SK-MEL-5 (cell line): ENCODE measurements at regions of chr4 and their contacts with region 1.

Region 1: GRCh38 chr4:28073860-28074555 is 1213.4 kb downstream of the STIM2 start:
- DNase-seq: peak; percentile 35

Region 2: DNA sequence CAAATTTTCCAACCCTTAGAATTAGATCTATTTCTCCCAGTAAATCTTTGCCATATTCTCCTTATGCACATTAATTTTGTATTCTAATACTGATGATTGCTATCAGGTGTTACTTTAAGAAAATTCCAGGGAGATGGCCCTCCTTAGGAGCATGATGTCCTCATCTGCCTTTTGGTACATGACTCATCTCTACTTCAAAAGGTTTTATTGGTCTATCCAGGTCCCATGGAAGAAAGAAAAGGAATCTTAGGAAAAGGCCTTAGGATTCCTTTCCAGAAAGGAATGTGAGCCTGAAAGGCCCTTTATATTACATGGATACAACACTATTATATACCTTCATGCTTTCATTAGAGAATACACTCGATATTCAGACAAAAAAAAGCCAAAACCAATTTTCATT is 245.2 kb before region 1 on chr4:
- in situ Hi-C with region 1: no loop called
- DNase-seq: peak; percentile 6

Region 3: DNA sequence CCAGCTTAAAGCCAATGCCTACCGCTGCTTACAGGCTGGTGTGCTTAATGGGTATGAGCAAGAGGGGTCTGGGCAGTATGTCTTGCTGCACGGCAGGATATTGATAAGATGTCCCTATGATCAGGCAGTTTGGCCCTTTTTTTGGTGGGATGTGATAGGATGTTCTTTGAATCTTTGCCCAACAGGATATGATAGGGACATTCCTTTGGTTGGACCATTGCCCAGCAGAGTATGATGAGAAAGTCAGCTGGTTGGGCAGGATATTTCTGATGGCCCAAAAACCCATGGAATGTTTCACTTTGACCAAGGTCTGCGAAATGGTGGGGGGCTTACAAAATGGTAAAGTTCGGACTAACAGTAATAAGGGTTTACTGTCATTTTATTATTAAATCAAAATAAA is 152.8 kb before region 1 on chr4:
- in situ Hi-C with region 1: loop called (anchors 25 kb)
- DNase-seq: peak; percentile 22

Region 4: GRCh38 chr4:28287837-28288236 is 213.8 kb after region 1 on chr4:
- in situ Hi-C with region 1: no loop called
- DNase-seq: peak; percentile 4